ENCODE measurements at regions of chr15 and their contacts with region 1.

Region 1: GRCh38 chr15:58758138-58758537 is 8.6 kb upstream of the ADAM10 start:
- H3K4me3 Mint-ChIP-seq: no peak overlapping the region
- H3K27ac Mint-ChIP-seq: no peak overlapping the region
- H3K4me1 Mint-ChIP-seq: peaks cover 4% of the 10 kb centered on the region
- H3K27me3 Mint-ChIP-seq: no peaks in the 10 kb centered on the region

Region 2: GRCh38 chr15:58227706-58228543 is 530.2 kb before region 1 on chr15:
- intact Hi-C with region 1: loop called (anchors 5 kb)
- H3K4me3 Mint-ChIP-seq: no peak overlapping the region
- H3K27ac Mint-ChIP-seq: no peak overlapping the region
- H3K4me1 Mint-ChIP-seq: peaks cover 19% of the 10 kb centered on the region
- H3K27me3 Mint-ChIP-seq: no peaks in the 10 kb centered on the region

Region 3: DNA sequence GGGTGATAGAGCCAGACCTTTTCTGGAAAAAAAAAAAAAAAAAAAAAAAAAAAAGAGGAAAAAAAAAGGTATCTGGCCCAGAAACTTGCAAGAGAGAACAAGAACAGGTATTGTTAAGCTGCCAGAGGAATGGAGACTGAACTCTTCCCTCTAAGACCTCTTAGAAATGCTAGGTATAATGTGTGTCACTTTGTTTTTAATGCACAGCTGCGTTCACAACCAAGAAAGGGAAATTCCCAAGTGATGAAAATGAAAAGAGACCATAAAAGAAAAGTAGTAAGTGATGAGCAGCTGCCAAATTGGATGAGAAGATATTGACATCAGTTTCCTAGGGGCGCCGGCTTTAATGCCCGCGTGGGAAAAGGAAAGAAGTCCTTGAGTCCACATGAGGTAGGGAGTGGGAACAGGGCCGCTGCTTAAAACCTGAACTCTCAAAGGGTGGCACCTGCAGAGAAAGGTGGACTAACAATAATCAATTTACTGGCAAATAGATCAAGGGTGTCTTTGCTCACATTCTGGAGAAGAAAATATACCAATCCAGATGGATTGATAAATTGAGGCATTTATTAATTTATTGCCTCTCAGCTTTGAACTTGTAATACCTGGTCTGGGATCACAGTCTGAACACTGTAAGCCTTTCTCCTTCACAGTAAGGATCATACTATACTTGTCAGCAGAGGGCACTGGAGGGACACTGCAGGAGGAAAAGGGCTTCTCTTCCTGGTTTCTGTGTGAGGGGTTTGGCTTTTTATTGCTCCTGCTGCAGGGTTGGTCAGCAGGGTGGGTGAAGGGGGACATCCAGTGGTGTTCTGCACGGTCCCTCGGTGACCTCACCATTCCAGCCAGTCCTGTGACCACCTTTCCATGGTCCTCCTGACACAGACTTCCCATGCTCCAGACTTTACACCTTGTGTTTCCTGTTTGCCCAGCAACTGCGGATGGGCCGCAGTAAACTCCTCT is 488.4 kb before region 1 on chr15:
- intact Hi-C with region 1: loop called (anchors 2 kb)
- H3K4me3 Mint-ChIP-seq: no peak overlapping the region
- H3K27ac Mint-ChIP-seq: no peak overlapping the region
- H3K4me1 Mint-ChIP-seq: peaks cover 5% of the 10 kb centered on the region
- H3K27me3 Mint-ChIP-seq: peaks cover 1% of the 10 kb centered on the region

Region 4: GRCh38 chr15:58616171-58616570 is 142.0 kb before region 1 on chr15:
- intact Hi-C with region 1: no loop called
- H3K4me3 Mint-ChIP-seq: no peak overlapping the region
- H3K27ac Mint-ChIP-seq: no peak overlapping the region
- H3K4me1 Mint-ChIP-seq: peaks cover 31% of the 10 kb centered on the region
- H3K27me3 Mint-ChIP-seq: no peaks in the 10 kb centered on the region

Measured in dendritic cell treated with granulocyte-macrophage colony-stimulating factor and Interleukin-4, amounts not matched to agents 40 ng/mL and 50 ng/mL, for 4 days (primary cell).